Activated CD4-positive, alpha-beta memory T cell treated with anti-CD3 and anti-CD28 coated beads for 36 hours (primary cell): ENCODE measurements at regions of chr3 and their contacts with region 1.

Region 1: DNA sequence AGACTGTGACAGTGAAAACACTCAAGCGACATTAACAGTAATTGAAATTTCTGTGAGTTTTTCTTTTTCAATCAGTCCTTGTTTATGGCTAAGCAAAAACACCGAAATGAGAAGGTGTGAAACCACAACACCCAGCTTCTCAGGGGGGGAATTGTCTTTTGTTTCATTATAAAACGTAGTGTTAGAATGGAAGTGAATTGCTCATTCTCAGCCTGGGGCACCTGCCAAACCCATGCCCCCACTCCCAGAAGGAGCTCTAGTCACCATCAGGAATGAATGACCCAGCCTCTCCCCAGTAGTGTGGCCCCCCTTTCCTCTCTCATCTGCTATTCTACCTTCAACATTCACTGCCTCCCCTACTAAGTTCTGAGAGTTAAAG is 185.8 kb upstream of the CFAP20DC start:
- DNase-seq: peak; percentile 71
- H3K4me3 Mint-ChIP-seq: no peak overlapping the region
- H3K27ac Mint-ChIP-seq: no peak overlapping the region
- H3K4me1 Mint-ChIP-seq: peaks cover 19% of the 10 kb centered on the region
- H3K27me3 Mint-ChIP-seq: peaks cover 15% of the 10 kb centered on the region

Region 2: DNA sequence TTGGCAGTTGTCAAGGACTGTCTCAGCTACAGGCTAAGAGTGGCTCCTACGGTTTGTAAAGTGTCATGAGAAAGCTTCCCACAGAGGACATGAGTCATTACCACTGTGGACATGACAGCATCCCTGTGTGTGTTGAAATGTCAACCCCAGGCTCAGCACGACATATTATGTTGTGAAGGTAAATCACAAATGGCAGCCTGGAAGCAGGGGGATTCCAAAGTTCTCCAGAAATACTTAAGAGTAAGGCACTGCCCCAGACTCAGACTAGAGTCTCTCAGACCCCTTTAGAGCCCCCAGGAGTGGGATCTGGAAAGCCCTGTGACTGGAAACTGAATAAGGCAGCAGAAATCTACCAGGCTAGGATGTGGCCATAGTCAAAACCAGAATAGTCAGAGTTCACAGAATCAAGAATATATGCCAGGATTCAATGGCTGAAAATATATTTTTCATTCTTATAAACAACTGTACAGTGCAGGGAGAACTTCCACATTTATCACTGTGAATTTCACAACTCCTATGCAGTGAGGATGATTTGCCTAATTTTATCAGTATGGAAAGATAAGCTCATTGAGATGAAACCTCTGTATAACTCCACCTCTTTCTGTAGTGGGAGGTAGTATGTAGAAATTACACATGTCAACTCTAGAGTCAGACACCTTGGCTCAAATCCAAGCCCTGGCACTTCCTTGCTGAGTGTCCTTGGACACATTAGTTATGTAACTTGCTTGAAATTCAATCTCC is 51.3 kb after region 1 on chr3:
- CTCF ChIA-PET with region 1: interaction called, 7 read pairs
- POLR2A ChIA-PET with region 1: interaction called, 3 read pairs
- intact Hi-C with region 1: loop called (anchors 1 kb)
- DNase-seq: peak; percentile 52
- H3K4me3 Mint-ChIP-seq: no peak overlapping the region
- H3K27ac Mint-ChIP-seq: peak overlapping the region; percentile 18
- H3K4me1 Mint-ChIP-seq: peaks cover 35% of the 10 kb centered on the region
- H3K27me3 Mint-ChIP-seq: no peaks in the 10 kb centered on the region

Region 3: DNA sequence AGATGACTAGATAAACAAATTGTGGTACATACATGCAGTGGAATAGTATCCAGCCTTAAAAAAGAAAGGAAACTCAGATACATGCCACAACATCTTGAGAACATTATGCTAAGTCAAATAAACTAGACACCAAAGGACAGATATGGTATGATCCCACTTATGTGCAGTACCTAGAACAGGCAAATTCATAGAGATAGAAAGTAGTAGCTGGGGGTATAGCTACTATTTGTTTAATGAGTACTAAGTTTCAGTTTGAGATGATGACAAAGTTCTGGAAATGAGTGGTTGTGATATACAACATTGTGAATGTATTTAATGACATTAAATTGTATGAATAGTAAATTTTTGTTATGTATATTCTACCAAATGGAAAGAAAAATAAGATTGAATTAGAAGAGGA is 291.4 kb after region 1 on chr3:
- CTCF ChIA-PET with region 1: interaction called, 3 read pairs
- POLR2A ChIA-PET with region 1: no interaction called
- intact Hi-C with region 1: loop called (anchors 1 kb)
- DNase-seq: no peak
- H3K4me3 Mint-ChIP-seq: no peak overlapping the region
- H3K27ac Mint-ChIP-seq: peak overlapping the region; percentile 0
- H3K4me1 Mint-ChIP-seq: peaks cover 15% of the 10 kb centered on the region
- H3K27me3 Mint-ChIP-seq: peaks cover 2% of the 10 kb centered on the region